Right cardiac atrium (tissue), 5 donors: ENCODE measurements at regions of chr10 and their contacts with region 1.

Region 1: GRCh38 chr10:12068449-12069269 is at the start of gene DHTKD1:
- DNase-seq: peak; percentile 99 to 100 (median 100)
- ATAC-seq: peak; percentile 99 to 100
- H3K4me3 ChIP-seq: peak within 1 kb of the TSS; percentile 97
- H3K27ac ChIP-seq: peak within 1 kb of the TSS; percentile 78
- H3K4me1 ChIP-seq: peaks cover 3% of the 10 kb centered on the region
- H3K27me3 ChIP-seq: no peaks in the 10 kb centered on the region
- total RNA-seq, gene DHTKD1: 13.4 to 28.5 (median 19.3) TPM

Region 2: DNA sequence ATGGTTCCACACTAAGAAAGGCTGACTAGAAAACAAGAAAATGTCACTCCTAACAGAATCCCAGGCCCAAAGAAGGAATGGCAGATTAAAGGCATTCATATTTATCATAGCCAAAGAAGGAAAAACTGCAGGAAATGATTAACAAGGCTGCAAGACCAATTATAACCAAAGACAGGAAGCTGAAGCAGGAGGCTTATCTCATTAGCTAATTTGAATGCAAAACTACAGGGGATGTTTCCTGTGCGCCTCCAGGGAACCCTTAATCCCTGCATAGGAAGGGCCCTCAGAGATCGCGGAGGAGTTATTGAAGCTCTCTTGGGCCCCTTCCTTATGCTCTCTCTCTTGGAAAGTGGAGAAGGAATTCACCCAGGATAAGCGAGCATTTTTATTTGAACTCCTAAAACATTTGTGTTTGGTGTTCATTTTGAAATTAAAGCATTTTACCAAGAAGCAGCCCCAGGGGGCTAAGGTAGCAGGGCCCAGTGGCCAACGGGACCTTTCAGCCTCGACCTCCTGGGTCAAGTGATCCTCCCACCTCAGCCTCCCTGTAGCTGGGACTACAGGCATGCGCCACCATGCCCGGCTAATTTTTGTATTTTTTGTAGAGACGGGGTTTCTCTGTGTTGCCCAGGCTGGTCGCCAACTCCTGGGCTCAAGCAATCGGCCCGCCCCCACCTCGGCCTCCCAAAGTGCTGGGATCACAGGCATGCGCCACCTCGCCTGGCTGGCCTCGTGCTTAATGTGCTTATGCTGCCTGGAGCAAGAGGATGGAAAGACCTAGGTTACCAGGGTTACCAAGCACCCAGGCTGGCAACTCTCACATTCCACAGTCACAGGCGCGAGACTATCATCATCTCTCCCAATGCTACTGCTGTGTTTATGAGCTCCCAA is 269.6 kb before region 1 on chr10:
- intact Hi-C with region 1: no loop called
- DNase-seq: no peak
- ATAC-seq: peak; percentile 53 to 75
- H3K4me3 ChIP-seq: no peak overlapping the region
- H3K27ac ChIP-seq: no peak overlapping the region
- H3K4me1 ChIP-seq: no peaks in the 10 kb centered on the region
- H3K27me3 ChIP-seq: no peaks in the 10 kb centered on the region

Region 3: DNA sequence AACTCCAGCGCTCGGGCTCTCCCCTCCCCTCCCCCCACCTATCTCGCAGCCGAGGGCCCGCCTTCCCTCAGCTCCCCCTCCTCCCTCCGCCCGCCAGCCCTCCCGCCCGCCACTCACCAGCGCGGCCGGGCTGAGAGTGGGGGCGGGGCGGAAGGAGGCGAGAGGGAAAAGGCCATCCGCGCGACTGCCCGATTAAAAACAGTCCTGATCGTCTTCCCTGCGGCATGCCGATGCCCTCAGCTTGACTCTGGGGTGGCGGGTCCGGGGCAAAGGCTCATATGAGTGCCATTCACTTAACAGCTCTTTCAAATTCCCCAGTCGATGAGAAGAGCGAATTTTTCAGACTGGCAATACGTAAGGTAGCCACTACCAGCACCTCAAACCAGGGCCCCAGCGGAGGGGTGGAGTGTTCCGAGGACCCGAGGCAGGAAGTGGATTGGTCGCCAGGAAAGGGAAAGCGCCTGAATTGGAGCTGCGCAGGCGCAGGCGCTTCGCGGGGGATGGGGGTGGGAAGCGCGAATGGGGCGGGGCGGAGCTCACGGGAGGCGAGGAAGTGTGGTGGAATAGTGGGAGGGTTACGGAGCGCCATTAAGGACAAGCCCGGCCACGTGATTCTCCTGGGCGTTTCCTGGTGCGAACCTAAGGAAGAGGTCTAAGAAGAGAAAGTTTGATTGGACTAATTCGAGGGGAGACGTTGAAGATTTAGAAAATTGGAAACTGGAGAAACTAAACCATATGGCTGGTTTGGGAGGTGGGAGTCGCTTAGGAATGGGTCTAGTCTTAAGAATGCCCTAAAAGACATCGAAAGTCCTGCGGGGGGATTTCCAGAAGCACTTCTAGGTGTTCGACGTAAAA is 25.6 kb before region 1 on chr10 and contains the start of gene UPF2:
- intact Hi-C with region 1: loop called in 1 of 4 experiments (anchors 2 kb)
- DNase-seq: peak; percentile 98 to 99 (median 99)
- ATAC-seq: peak; percentile 96 to 97
- H3K4me3 ChIP-seq: peak within 1 kb of the TSS; percentile 90
- H3K27ac ChIP-seq: peak within 1 kb of the TSS; percentile 85
- H3K4me1 ChIP-seq: no peaks in the 10 kb centered on the region
- H3K27me3 ChIP-seq: no peaks in the 10 kb centered on the region
- total RNA-seq, gene UPF2: 14.7 to 21.0 (median 18.7) TPM